ENCODE measurements at regions of chr1 and their contacts with region 1.

Region 1: DNA sequence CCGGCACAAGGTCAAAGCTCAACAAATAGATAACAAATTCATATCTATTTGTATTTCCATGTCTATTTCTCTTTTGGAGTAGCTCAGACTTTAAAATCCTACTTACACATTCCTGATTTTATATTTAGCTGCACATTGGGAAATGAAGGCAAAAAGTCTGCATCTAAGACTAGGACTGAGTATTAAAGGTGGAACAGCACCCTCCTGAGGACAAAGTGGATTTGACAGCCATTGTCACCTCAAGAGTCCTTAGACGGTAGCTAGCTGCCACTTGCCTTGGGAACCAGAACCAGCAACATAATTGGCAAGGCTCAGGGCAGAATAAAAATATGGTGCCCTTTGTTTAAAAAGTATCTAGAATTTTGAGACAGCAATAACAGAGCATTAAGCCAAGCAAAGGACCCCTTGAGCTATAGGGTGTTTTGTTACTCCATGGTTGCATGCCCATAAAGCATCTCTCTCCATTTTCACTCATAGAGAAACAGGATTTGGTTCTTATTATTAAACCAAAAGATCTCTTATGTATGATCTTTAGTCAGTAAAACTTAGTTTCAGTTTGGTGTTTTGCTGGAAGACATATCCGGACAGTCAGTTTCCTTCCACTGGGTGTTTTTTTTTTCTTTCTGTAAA is 30.0 kb upstream of the SGIP1 start:
- DNase-seq: peak; percentile 49
- H3K4me3 Mint-ChIP-seq: no peak overlapping the region
- H3K27ac Mint-ChIP-seq: no peak overlapping the region
- H3K4me1 Mint-ChIP-seq: no peaks in the 10 kb centered on the region
- H3K27me3 Mint-ChIP-seq: no peaks in the 10 kb centered on the region
- CTCF ChIP-seq: peak; percentile 31

Region 2: GRCh38 chr1:65992165-65992840 is 511.7 kb before region 1 on chr1:
- CTCF ChIA-PET with region 1: no interaction called
- intact Hi-C with region 1: no loop called
- DNase-seq: no peak
- H3K4me3 Mint-ChIP-seq: no peak overlapping the region
- H3K27ac Mint-ChIP-seq: no peak overlapping the region
- H3K4me1 Mint-ChIP-seq: peaks cover under 1% of the 10 kb centered on the region
- H3K27me3 Mint-ChIP-seq: no peaks in the 10 kb centered on the region
- CTCF ChIP-seq: no peak

Region 3: GRCh38 chr1:66253330-66253921 is 250.5 kb before region 1 on chr1:
- CTCF ChIA-PET with region 1: no interaction called
- intact Hi-C with region 1: loop called (anchors 2 kb)
- DNase-seq: peak; percentile 39
- H3K4me3 Mint-ChIP-seq: no peak overlapping the region
- H3K27ac Mint-ChIP-seq: no peak overlapping the region
- H3K4me1 Mint-ChIP-seq: peaks cover 11% of the 10 kb centered on the region
- H3K27me3 Mint-ChIP-seq: no peaks in the 10 kb centered on the region
- CTCF ChIP-seq: peak; percentile 67

Region 4: GRCh38 chr1:66435541-66435940 is 68.4 kb before region 1 on chr1:
- CTCF ChIA-PET with region 1: no interaction called
- intact Hi-C with region 1: no loop called
- DNase-seq: no peak
- H3K4me3 Mint-ChIP-seq: no peak overlapping the region
- H3K27ac Mint-ChIP-seq: no peak overlapping the region
- H3K4me1 Mint-ChIP-seq: peaks cover 37% of the 10 kb centered on the region
- H3K27me3 Mint-ChIP-seq: no peaks in the 10 kb centered on the region
- CTCF ChIP-seq: no peak

Region 5: GRCh38 chr1:66446261-66447001 is 57.5 kb before region 1 on chr1:
- CTCF ChIA-PET with region 1: interaction called, 8 read pairs
- intact Hi-C with region 1: loop called (anchors 5 kb)
- DNase-seq: peak; percentile 40
- H3K4me3 Mint-ChIP-seq: no peak overlapping the region
- H3K27ac Mint-ChIP-seq: no peak overlapping the region
- H3K4me1 Mint-ChIP-seq: no peaks in the 10 kb centered on the region
- H3K27me3 Mint-ChIP-seq: no peaks in the 10 kb centered on the region
- CTCF ChIP-seq: peak; percentile 86

Region 6: DNA sequence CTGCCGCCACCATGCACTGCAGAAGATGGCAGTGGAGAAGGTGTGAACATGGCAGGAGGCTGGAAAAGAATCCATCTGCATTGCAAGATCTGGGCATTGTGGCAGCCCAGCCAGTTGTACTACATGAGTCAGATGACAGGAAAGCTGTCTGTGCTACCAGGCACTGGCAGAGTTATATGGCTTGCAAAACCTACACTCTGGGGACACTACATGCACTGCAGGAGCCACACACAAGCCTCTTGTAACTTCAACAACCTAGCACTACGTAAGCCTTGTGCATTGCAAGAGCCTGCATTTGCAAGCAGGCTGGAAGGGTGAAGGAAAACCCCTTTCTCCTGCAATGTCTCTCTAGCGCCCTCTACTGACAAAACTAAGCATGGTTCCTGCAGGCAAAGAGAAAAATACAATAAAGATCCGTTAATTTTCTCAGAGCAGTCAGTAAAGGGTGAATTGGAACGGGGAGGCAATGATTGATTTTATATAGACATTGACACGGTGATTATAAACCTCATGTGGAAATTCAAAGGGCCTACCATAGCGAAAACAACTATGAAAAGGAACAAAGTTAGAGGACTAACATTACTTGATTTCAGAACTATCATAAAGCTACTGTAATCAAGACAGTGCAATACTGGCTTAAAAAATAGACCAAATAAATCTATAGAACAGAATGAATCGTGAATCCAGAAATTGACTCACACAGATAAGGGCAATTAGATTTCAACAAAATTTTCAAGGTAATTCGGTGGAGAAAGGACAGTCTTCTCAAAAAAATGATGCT is 222.1 kb after region 1 on chr1:
- CTCF ChIA-PET with region 1: no interaction called
- intact Hi-C with region 1: loop called (anchors 1 kb)
- DNase-seq: peak; percentile 66
- H3K4me3 Mint-ChIP-seq: no peak overlapping the region
- H3K27ac Mint-ChIP-seq: no peak overlapping the region
- H3K4me1 Mint-ChIP-seq: no peaks in the 10 kb centered on the region
- H3K27me3 Mint-ChIP-seq: no peaks in the 10 kb centered on the region
- CTCF ChIP-seq: peak; percentile 88

Region 7: GRCh38 chr1:66769512-66770229 is 265.7 kb after region 1 on chr1:
- CTCF ChIA-PET with region 1: no interaction called
- intact Hi-C with region 1: no loop called
- DNase-seq: no peak
- H3K4me3 Mint-ChIP-seq: no peak overlapping the region
- H3K27ac Mint-ChIP-seq: no peak overlapping the region
- H3K4me1 Mint-ChIP-seq: no peaks in the 10 kb centered on the region
- H3K27me3 Mint-ChIP-seq: no peaks in the 10 kb centered on the region
- CTCF ChIP-seq: no peak

Measured in Calu3 (cell line).